ENCODE measurements at regions of chr16 and their contacts with region 1.

Region 1: DNA sequence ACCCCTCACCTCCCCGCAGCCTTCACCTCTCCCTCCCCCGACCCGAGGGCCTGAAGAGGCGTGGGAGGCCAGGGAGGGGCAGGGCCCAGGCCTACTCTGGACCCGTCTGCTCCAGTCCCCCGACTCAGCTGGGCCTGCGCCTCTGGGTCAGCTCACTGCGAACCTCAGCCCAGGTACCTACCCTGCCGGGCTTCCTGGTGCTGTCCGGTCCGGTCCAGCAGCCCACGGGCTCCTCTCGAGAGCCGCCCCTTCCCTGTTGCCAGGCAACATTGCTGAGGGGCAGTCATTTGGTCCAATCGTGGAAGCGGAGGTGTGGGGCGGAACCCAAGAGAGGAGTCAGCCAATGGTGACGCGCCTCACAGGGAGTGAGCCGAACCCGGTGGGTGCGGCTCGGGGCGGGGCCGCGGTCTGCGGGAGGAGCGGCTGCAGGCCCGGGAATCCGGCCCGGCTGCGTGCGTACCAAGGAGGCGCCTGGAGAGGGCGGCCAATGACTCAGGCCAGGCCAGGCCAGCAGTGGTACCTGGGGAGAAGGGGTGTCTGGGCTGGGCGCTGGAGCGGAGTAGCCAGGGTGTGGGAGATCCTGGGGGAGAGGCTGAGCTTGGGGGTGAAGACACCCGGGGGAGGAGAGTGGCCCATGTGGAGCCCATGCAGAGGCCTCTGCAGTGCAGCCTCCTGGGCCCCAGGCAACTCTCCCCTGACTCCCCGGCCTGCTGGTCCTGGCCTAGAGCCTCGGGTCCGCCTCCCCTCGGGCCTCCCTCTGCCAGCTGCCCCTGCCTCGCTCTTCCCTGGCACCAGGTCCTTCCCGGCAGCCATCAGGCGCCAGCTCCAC is at the start of gene MEAK7:
- DNase-seq: peak; percentile 99
- ATAC-seq: peak; percentile 96
- H3K4me3 Mint-ChIP-seq: peak within 1 kb of the TSS; percentile 91
- H3K27ac Mint-ChIP-seq: peak within 1 kb of the TSS; percentile 88
- H3K4me1 Mint-ChIP-seq: peaks cover 48% of the 10 kb centered on the region
- H3K27me3 Mint-ChIP-seq: no peaks in the 10 kb centered on the region
- CTCF ChIP-seq: no peak
- total RNA-seq, gene MEAK7: 21.1 to 22.4 TPM

Region 2: GRCh38 chr16:84277237-84277823 is 227.3 kb before region 1 on chr16:
- CTCF ChIA-PET with region 1: interaction called, 18 read pairs
- POLR2A ChIA-PET with region 1: no interaction called
- intact Hi-C with region 1: no loop called
- DNase-seq: peak; percentile 84
- ATAC-seq: peak; percentile 82
- H3K4me3 Mint-ChIP-seq: no peak overlapping the region
- H3K27ac Mint-ChIP-seq: no peak overlapping the region
- H3K4me1 Mint-ChIP-seq: no peaks in the 10 kb centered on the region
- H3K27me3 Mint-ChIP-seq: peaks cover 4% of the 10 kb centered on the region
- CTCF ChIP-seq: peak; percentile 91

Region 3: DNA sequence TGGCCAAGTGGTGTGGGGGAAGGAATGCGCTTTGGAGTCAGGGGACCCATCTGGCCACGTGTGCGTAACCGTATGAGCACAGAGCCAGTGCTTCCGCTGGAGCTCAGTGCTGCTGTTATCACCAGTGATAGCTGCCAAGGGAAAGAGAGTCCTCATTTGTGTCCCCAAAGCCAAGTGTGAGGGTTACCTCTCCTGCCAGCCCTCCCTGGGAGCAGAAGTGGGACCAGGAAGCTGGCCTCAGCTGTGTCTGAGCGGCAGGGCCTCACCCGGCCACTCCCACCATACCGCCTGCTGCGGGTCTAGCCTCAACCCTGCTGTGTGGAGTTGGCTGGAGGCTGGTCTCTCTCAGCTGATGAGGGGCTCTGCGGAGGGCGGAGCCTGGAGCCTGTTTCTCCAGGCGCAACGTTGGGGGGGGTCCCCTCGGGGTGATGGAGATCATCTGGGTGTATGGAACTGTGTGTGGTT is 44.7 kb before region 1 on chr16:
- CTCF ChIA-PET with region 1: no interaction called
- POLR2A ChIA-PET with region 1: no interaction called
- intact Hi-C with region 1: no loop called
- DNase-seq: no peak
- ATAC-seq: no peak
- H3K4me3 Mint-ChIP-seq: no peak overlapping the region
- H3K27ac Mint-ChIP-seq: no peak overlapping the region
- H3K4me1 Mint-ChIP-seq: no peaks in the 10 kb centered on the region
- H3K27me3 Mint-ChIP-seq: no peaks in the 10 kb centered on the region
- CTCF ChIP-seq: no peak

Region 4: GRCh38 chr16:84518748-84519341 is 14.2 kb after region 1 on chr16:
- CTCF ChIA-PET with region 1: interaction called, 15 read pairs
- POLR2A ChIA-PET with region 1: interaction called, 13 read pairs
- intact Hi-C with region 1: no loop called
- DNase-seq: peak; percentile 90
- ATAC-seq: peak; percentile 59
- H3K4me3 Mint-ChIP-seq: peak overlapping the region; percentile 57
- H3K27ac Mint-ChIP-seq: peak overlapping the region; percentile 89
- H3K4me1 Mint-ChIP-seq: peaks cover 64% of the 10 kb centered on the region
- H3K27me3 Mint-ChIP-seq: no peaks in the 10 kb centered on the region
- CTCF ChIP-seq: peak; percentile 30

Region 5: GRCh38 chr16:84548971-84549844 is 44.6 kb after region 1 on chr16:
- CTCF ChIA-PET with region 1: interaction called, 26 read pairs
- POLR2A ChIA-PET with region 1: interaction called, 17 read pairs
- intact Hi-C with region 1: no loop called
- DNase-seq: peak; percentile 82
- ATAC-seq: peak; percentile 57
- H3K4me3 Mint-ChIP-seq: peak overlapping the region; percentile 84
- H3K27ac Mint-ChIP-seq: peak overlapping the region; percentile 98
- H3K4me1 Mint-ChIP-seq: peaks cover 54% of the 10 kb centered on the region
- H3K27me3 Mint-ChIP-seq: no peaks in the 10 kb centered on the region
- CTCF ChIP-seq: peak; percentile 19

Region 6: GRCh38 chr16:84555418-84556195 is 51.0 kb after region 1 on chr16:
- CTCF ChIA-PET with region 1: interaction called, 26 read pairs
- POLR2A ChIA-PET with region 1: interaction called, 11 read pairs
- intact Hi-C with region 1: no loop called
- DNase-seq: no peak
- ATAC-seq: no peak
- H3K4me3 Mint-ChIP-seq: no peak overlapping the region
- H3K27ac Mint-ChIP-seq: no peak overlapping the region
- H3K4me1 Mint-ChIP-seq: peaks cover 29% of the 10 kb centered on the region
- H3K27me3 Mint-ChIP-seq: no peaks in the 10 kb centered on the region
- CTCF ChIP-seq: no peak

Region 7: GRCh38 chr16:84566548-84567257 is 62.1 kb after region 1 on chr16:
- CTCF ChIA-PET with region 1: no interaction called
- POLR2A ChIA-PET with region 1: no interaction called
- intact Hi-C with region 1: no loop called
- DNase-seq: no peak
- ATAC-seq: no peak
- H3K4me3 Mint-ChIP-seq: no peak overlapping the region
- H3K27ac Mint-ChIP-seq: peak overlapping the region; percentile 18
- H3K4me1 Mint-ChIP-seq: peaks cover 24% of the 10 kb centered on the region
- H3K27me3 Mint-ChIP-seq: no peaks in the 10 kb centered on the region
- CTCF ChIP-seq: no peak

Region 8: GRCh38 chr16:84599521-84600202 is 95.0 kb after region 1 on chr16:
- CTCF ChIA-PET with region 1: interaction called, 12 read pairs
- POLR2A ChIA-PET with region 1: interaction called, 9 read pairs
- intact Hi-C with region 1: no loop called
- DNase-seq: peak; percentile 93
- ATAC-seq: peak; percentile 61
- H3K4me3 Mint-ChIP-seq: peak overlapping the region; percentile 83
- H3K27ac Mint-ChIP-seq: peak overlapping the region; percentile 100
- H3K4me1 Mint-ChIP-seq: peaks cover 92% of the 10 kb centered on the region
- H3K27me3 Mint-ChIP-seq: no peaks in the 10 kb centered on the region
- CTCF ChIP-seq: no peak

Region 9: DNA sequence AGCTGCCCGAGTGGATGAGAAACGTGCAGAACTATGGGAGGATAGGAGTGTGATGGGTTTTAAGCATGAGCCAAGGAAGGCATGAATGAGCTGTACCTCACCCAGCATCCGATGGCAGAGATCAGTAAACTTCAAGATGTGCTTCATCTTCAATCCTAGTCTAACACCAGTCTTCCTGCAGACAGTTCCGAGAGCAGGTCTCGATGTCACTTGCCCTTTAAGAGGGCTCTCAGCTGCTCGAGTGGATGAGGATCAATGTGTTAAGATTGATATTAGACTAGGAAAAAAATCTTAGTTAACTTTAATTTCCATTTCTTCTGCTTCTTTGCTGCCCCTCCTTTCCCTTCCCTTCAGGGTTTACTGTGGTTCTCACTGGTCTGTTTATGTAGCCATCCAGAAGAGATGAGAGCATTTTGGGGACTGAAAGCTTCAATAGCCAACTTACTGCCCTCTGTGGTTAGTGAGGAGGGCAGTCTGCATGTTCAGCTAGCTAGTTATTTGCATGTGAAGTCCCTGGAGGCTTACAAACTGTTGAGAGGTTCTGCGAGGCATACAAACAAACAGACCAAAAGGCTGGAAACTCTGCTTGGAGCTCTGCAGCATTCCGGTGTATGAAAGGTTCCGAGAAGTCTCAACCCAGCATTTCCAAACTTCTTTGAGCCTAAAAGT is 158.9 kb after region 1 on chr16:
- CTCF ChIA-PET with region 1: no interaction called
- POLR2A ChIA-PET with region 1: no interaction called
- intact Hi-C with region 1: no loop called
- DNase-seq: no peak
- ATAC-seq: no peak
- H3K4me3 Mint-ChIP-seq: no peak overlapping the region
- H3K27ac Mint-ChIP-seq: no peak overlapping the region
- H3K4me1 Mint-ChIP-seq: peaks cover 8% of the 10 kb centered on the region
- H3K27me3 Mint-ChIP-seq: no peaks in the 10 kb centered on the region
- CTCF ChIP-seq: no peak